ENCODE measurements at regions of chr12 and their contacts with region 1.

Region 1: DNA sequence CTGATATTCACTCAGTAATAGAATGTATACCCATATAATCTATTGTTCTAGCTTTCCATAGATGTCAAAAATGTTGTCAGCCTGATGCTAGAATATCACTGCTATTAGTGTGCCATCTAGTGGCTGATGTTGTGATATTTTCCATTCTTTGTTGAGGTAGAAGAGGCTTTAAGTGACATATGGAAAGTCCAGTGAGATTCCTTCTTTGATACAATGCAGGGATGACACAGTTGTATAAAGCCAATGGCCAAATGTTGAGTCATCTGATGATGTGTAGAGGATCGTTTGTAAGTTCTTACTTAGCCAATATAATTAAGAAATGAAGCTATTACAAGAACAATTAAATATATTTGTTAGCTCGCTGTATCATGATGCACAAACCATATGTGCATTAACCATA is 58.1 kb upstream of the PCED1B start:
- DNase-seq: peak; percentile 28
- H3K4me3 Mint-ChIP-seq: no peak overlapping the region
- H3K27ac Mint-ChIP-seq: no peak overlapping the region
- H3K4me1 Mint-ChIP-seq: peaks cover 23% of the 10 kb centered on the region
- H3K27me3 Mint-ChIP-seq: no peaks in the 10 kb centered on the region
- CTCF ChIP-seq: peak; percentile 35

Region 2: DNA sequence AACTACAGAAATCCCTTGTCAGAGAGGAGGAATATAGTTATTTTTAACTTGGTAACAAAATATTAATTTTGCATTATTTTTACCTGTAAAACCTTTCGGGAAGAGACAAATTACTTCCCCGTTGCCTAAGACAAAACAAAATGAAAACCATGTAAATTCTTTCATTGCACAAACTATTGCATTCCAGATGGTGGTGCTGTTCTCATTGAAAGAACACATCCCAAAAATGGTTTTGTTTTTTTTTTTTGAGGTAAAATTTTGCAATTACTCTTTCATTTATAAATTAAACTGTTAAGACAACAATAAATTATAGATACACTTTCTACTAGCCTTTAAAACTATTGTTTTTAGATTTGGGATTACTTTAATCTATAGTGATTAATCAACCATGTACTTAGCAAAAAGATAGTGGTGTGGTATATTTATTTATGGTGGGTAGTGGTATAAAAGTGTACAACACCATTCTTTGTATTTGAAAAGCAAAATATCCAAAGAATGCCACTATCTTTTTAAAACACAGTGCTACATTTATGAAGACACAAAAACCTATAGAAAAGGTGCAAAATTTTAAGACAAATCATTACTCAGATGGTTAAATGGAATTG is 867.9 kb before region 1 on chr12:
- CTCF ChIA-PET with region 1: no interaction called
- intact Hi-C with region 1: loop called (anchors 5 kb)
- DNase-seq: no peak
- H3K4me3 Mint-ChIP-seq: no peak overlapping the region
- H3K27ac Mint-ChIP-seq: no peak overlapping the region
- H3K4me1 Mint-ChIP-seq: peaks cover 8% of the 10 kb centered on the region
- H3K27me3 Mint-ChIP-seq: no peaks in the 10 kb centered on the region
- CTCF ChIP-seq: peak; percentile 27

Region 3: GRCh38 chr12:46342562-46343033 is 678.7 kb before region 1 on chr12:
- CTCF ChIA-PET with region 1: no interaction called
- intact Hi-C with region 1: loop called (anchors 5 kb)
- DNase-seq: peak; percentile 23
- H3K4me3 Mint-ChIP-seq: no peak overlapping the region
- H3K27ac Mint-ChIP-seq: peak overlapping the region; percentile 15
- H3K4me1 Mint-ChIP-seq: peaks cover 17% of the 10 kb centered on the region
- H3K27me3 Mint-ChIP-seq: no peaks in the 10 kb centered on the region
- CTCF ChIP-seq: peak; percentile 30

Region 4: GRCh38 chr12:46944088-46944487 is 77.2 kb before region 1 on chr12:
- CTCF ChIA-PET with region 1: interaction called, 4 read pairs
- intact Hi-C with region 1: loop called (anchors 2 kb)
- DNase-seq: no peak
- H3K4me3 Mint-ChIP-seq: no peak overlapping the region
- H3K27ac Mint-ChIP-seq: no peak overlapping the region
- H3K4me1 Mint-ChIP-seq: peaks cover 9% of the 10 kb centered on the region
- H3K27me3 Mint-ChIP-seq: no peaks in the 10 kb centered on the region
- CTCF ChIP-seq: no peak

Region 5: GRCh38 chr12:47079468-47079980 is 58.2 kb after region 1 on chr12 and contains the starts of genes AMIGO2 and PCED1B:
- CTCF ChIA-PET with region 1: no interaction called
- intact Hi-C with region 1: no loop called
- DNase-seq: peak; percentile 64
- H3K4me3 Mint-ChIP-seq: peak within 1 kb of the TSS; percentile 95
- H3K27ac Mint-ChIP-seq: peak within 1 kb of the TSS; percentile 92
- H3K4me1 Mint-ChIP-seq: peaks cover 48% of the 10 kb centered on the region
- H3K27me3 Mint-ChIP-seq: no peaks in the 10 kb centered on the region
- CTCF ChIP-seq: no peak
- total RNA-seq, gene AMIGO2: 27.0 and 66.2 TPM in 2 replicates
- total RNA-seq, gene PCED1B: 2.1 and 4.1 TPM in 2 replicates

Measured in Calu3 (cell line).